PC-9 (cell line): ENCODE measurements at regions of chr1 and their contacts with region 1.

Region 1: DNA sequence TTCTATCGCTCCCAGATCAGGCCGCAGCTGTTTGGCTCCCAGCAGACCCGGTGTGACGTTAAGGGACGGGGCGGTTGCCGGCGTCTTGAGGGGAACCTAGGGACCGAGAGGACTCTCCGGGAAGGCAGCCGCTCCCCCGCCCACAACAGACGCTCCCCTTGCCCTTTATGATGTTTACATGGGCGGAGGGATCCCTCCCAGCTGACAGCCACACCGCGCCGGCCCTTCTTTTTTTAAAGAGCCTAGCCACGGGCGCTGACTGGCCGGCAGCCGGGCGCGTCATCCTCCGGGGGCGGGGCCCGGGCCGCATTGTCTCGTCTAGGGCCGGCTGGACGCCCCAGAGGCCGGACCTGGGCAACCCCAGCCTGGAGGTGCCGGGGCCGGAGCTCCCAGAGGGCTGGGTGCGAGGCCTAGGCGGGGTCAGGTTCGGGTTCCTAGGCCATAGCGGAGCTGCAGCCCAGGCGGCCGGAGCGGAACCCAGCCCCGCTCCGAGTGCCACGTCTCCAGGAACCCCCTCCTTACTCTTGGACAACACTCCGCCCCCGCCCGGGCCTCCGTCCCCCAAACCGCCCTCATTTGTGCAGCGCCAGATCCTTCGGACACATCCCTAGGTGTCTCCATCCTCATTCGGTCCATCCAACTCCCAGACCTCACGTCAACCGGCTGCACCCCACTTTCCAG is at the start of gene PCAT6:
- DNase-seq: peak; percentile 88 to 94
- H3K4me3 ChIP-seq: peak within 1 kb of the TSS; percentile 86
- H3K27ac ChIP-seq: peak within 1 kb of the TSS; percentile 56
- H3K4me1 ChIP-seq: peaks cover 47% of the 10 kb centered on the region
- H3K27me3 ChIP-seq: no peaks in the 10 kb centered on the region
- CTCF ChIP-seq: no peak
- total RNA-seq, gene PCAT6: 1.7 and 3.6 TPM in 2 replicates

Region 2: GRCh38 chr1:202697038-202697437 is 113.7 kb before region 1 on chr1:
- CTCF ChIA-PET with region 1: no interaction called
- POLR2A ChIA-PET with region 1: no interaction called
- intact Hi-C with region 1: no loop called
- DNase-seq: no peak
- H3K4me3 ChIP-seq: no peak overlapping the region
- H3K27ac ChIP-seq: no peak overlapping the region
- H3K4me1 ChIP-seq: no peaks in the 10 kb centered on the region
- H3K27me3 ChIP-seq: peaks cover 85% of the 10 kb centered on the region
- CTCF ChIP-seq: no peak

Region 3: GRCh38 chr1:202821452-202821851 is 10.7 kb after region 1 on chr1:
- CTCF ChIA-PET with region 1: no interaction called
- POLR2A ChIA-PET with region 1: interaction called, 14 read pairs
- intact Hi-C with region 1: no loop called
- DNase-seq: peak; percentile 40 to 91
- H3K4me3 ChIP-seq: no peak overlapping the region
- H3K27ac ChIP-seq: peak overlapping the region; percentile 72
- H3K4me1 ChIP-seq: peaks cover 16% of the 10 kb centered on the region
- H3K27me3 ChIP-seq: no peaks in the 10 kb centered on the region
- CTCF ChIP-seq: no peak

Region 4: DNA sequence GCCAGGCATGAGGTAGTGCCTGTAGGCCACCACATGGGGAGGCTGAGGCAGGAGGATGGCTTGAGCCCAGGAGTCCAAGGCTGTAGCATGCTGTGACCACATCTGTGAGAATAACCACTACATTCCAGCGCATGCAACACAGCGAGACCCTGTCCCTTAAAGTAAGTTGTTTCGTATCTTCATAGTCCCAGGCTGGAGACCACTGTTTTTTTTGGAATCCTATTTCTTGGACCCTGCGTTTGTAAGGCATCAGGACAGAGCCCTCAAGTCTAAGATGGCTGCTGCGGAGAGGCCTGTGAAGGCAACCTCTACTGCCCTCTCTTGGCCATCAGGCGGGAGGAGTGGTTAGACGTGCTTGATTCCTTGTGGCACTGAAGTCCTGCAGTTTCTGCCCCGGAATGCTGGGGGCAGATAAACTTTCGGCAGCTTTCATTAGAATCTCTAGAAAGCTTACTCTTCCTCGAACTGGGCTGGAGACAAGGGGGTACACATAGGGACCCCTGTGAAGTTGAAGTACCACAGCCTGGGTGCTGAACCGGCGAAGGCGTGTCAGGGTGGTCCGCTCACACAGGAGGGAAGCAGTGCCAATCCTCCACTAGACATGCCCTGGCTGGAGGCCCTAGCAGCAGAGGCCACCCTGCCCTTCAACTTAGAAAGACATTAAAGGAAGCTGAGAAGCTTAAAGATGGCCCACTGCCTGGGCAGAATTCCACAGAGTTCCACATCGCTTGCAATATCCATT is 41.6 kb after region 1 on chr1:
- CTCF ChIA-PET with region 1: no interaction called
- POLR2A ChIA-PET with region 1: no interaction called
- intact Hi-C with region 1: loop called (anchors 1 kb)
- DNase-seq: peak; percentile 46 to 57
- H3K4me3 ChIP-seq: no peak overlapping the region
- H3K27ac ChIP-seq: no peak overlapping the region
- H3K4me1 ChIP-seq: no peaks in the 10 kb centered on the region
- H3K27me3 ChIP-seq: no peaks in the 10 kb centered on the region
- CTCF ChIP-seq: peak; percentile 78

Region 5: DNA sequence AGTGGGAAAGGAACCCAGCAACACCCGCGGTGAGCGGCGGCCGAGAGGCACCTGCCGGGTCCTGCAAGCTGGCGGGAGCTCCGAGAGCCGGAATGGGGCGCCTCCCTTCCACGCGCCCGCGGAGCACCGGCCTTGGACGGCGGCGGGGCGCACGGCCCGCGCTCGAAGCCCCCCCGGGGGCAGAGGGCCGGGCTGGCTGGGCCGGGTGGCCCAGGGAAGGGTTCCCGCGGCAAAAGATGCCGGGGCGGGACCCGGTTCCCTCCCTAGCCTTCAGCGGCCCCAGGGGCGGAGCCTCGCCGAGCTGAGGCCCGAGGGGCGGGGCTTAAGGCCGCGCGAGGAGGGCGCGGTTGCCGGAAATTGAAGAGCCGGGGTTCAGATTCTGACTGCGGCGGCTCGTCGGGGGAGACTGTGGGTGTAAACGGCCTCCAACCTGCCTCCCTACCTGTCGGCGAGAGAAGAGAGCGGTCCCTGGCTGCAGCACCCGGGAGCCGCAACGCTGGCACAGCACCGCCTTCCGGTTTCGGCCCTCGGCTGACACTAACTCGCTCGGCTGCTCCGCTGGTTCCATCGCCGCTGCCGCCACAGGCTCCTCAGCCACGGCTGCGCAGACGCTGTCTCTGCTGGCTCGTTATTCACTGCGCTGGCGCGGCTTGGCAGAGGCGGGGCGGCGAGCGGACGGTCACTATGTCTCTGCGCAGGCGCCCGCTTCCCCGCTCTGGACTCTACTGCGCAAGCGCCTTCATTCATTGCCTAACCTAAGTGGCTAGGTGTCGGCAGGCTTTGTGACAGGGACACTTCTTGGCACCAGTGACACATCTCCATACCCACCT is 78.0 kb after region 1 on chr1 and contains the start of gene RABIF:
- CTCF ChIA-PET with region 1: no interaction called
- POLR2A ChIA-PET with region 1: no interaction called
- intact Hi-C with region 1: loop called (anchors 1 kb)
- DNase-seq: peak; percentile 90 to 97
- H3K4me3 ChIP-seq: peak within 1 kb of the TSS; percentile 89
- H3K27ac ChIP-seq: peak within 1 kb of the TSS; percentile 70
- H3K4me1 ChIP-seq: peaks cover 16% of the 10 kb centered on the region
- H3K27me3 ChIP-seq: no peaks in the 10 kb centered on the region
- CTCF ChIP-seq: no peak
- total RNA-seq, gene RABIF: 9.4 and 10.9 TPM in 2 replicates

Region 6: GRCh38 chr1:202905331-202905730 is 94.6 kb after region 1 on chr1:
- CTCF ChIA-PET with region 1: no interaction called
- POLR2A ChIA-PET with region 1: no interaction called
- intact Hi-C with region 1: no loop called
- DNase-seq: no peak
- H3K4me3 ChIP-seq: no peak overlapping the region
- H3K27ac ChIP-seq: no peak overlapping the region
- H3K4me1 ChIP-seq: no peaks in the 10 kb centered on the region
- H3K27me3 ChIP-seq: no peaks in the 10 kb centered on the region
- CTCF ChIP-seq: no peak

Region 7: GRCh38 chr1:202968840-202969295 is 158.1 kb after region 1 on chr1:
- CTCF ChIA-PET with region 1: no interaction called
- POLR2A ChIA-PET with region 1: no interaction called
- intact Hi-C with region 1: loop called (anchors 5 kb)
- DNase-seq: peak in 1 of 2 experiments; percentile 49
- H3K4me3 ChIP-seq: no peak overlapping the region
- H3K27ac ChIP-seq: no peak overlapping the region
- H3K4me1 ChIP-seq: peaks cover 16% of the 10 kb centered on the region
- H3K27me3 ChIP-seq: no peaks in the 10 kb centered on the region; the same call in 1 of the 2 replicates
- CTCF ChIP-seq: peak; percentile 68